ENCODE measurements at regions of chr12 and their contacts with region 1.

Region 1: DNA sequence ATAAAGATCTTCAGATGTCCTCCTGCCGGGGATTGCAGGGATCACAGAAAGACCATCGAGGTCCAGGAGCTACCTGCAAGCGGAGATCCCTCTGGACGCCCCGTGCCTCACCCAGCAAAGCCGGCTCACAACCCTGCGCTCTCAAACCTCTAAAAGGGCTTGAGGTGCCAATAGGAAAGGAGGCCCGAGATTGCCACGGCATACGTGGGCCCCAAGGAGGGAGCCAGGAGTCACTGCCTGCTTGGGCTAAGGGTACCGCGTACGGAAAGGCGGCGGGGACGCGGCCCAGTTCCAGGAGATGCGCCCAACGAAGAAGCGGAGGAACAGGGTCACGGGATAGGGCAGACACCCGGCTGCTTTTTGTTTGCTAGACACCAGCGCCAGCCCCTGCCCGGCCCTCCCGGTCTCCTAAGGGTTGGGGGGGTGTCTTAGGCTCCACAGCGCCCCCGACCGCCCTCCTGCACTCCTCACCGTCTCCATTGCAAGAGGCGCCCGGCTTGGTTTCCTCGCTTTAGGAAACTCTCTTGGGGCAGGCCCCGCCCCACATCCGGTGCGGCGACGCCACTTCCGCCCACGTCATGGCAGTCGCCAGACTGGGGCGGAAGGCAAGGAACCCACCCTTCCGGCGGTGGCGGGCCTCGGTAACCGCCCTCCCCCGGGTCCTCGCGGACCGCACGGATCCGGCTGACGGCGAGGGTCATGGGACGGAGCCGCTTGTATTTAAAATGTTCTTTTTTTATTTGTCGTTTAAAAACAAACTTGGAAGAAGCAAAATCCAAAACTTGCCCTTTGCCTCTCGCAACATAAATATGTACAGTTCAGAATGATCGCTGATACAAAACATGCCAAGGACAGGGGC is at the start of gene PRKAG1:
- DNase-seq: peak; percentile 92 to 96
- ATAC-seq: peak; percentile 74 to 82
- H3K4me3 ChIP-seq: peak within 1 kb of the TSS; percentile 79 to 98 (median 89)
- H3K27ac ChIP-seq: peak within 1 kb of the TSS; percentile 96 to 99 (median 98)
- H3K4me1 ChIP-seq: peaks cover 37 to 43% of the 10 kb centered on the region in 2 donors
- H3K27me3 ChIP-seq: no peaks in the 10 kb centered on the region
- CTCF ChIP-seq: peak in 3 of 5 experiments; percentile 34 to 49 (median 41)
- POLR2A ChIP-seq: peak; percentile 89 to 95
- total RNA-seq, gene PRKAG1: 67.4 to 97.7 (median 83.9) TPM

Region 2: GRCh38 chr12:48671231-48671856 is 347.1 kb before region 1 on chr12:
- in situ Hi-C with region 1: no loop called
- intact Hi-C with region 1: loop called (anchors 5 kb)
- DNase-seq: peak; percentile 52 to 56
- ATAC-seq: peak; percentile 75 to 87
- H3K4me3 ChIP-seq: no peak overlapping the region
- H3K27ac ChIP-seq: peak overlapping the region; percentile 88 to 99 (median 96)
- H3K4me1 ChIP-seq: peaks cover 51 to 72% of the 10 kb centered on the region in 2 donors
- H3K27me3 ChIP-seq: no peaks in the 10 kb centered on the region
- CTCF ChIP-seq: no peak
- POLR2A ChIP-seq: no peak

Region 3: DNA sequence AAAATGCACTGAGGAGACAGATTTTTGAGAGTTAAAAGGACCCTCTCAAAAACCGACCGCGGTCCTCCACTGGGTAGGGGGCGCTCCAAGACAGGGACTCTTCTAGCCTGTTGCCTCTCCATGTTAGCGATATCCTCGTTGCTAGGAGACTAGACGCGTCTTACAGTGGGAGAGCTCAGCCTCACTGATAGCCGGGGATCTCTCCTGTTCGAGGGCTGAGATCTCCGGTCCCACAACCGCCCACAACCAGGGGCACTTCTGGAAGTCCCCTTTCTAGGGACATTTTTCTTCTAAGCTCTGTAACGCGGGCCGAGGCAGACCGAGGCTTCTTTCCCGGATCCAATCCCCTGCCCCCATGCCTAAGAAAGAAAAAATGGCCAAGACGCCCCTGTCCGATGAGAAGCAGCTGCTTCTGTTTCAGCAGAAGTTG is 114.5 kb before region 1 on chr12:
- in situ Hi-C with region 1: no loop called
- intact Hi-C with region 1: no loop called
- DNase-seq: peak in 1 of 2 donors; percentile 39
- ATAC-seq: peak in 1 of 2 donors; percentile 58
- H3K4me3 ChIP-seq: peak overlapping the region; percentile 27 to 53 (median 44)
- H3K27ac ChIP-seq: no peak overlapping the region
- H3K4me1 ChIP-seq: peaks cover 0 to 4% of the 10 kb centered on the region in 2 donors
- H3K27me3 ChIP-seq: peaks cover 0 to 8% (median 4%) of the 10 kb centered on the region in 3 donors
- CTCF ChIP-seq: peak in 2 of 5 experiments; percentile 30 to 49
- POLR2A ChIP-seq: no peak

Region 4: DNA sequence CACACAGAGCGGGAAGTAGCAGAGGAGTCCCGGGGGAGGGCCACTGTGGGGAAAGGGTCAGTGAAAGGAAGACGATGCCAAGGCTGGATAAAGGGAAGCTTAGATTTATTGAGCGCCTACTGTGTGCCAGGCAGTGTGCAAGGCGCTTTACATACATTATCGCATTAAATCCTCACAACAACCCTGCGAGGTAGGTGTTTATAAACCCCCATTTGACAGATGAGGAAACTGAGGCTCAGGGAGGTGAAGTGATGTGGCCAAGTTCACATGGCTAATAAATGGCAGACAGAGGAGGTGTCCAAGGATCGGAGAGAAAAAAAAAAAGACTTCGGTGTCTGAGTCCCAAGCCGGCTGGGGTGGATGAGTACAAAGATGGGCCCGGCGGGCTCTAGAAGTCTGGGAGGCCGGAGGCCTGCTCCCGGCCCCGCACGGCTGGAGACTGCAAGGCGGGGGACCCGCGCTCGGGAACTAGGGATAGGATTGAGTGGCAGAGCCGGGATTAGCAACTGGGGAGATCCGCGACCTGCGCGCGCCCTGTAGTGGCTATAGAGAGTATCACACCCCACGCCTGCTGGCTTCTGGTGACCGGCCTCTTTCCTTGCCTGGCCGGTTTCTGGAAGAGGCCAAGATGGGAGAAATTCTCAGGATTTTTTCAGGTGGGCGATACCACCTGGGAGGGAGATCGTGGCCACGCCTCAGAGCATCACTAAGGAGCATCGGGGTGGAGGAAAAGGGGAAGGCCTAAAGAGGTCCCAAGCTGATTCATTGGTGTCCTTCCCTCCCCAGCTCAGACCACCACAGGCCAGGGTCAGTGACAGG is 23.2 kb before region 1 on chr12:
- in situ Hi-C with region 1: no loop called
- intact Hi-C with region 1: loop called (anchors 1 kb)
- DNase-seq: peak in 1 of 2 donors; percentile 82
- ATAC-seq: peak; percentile 40 to 48
- H3K4me3 ChIP-seq: peak overlapping the region; percentile 28 to 53 (median 46)
- H3K27ac ChIP-seq: peak overlapping the region in 3 of 4 donors; percentile 32 to 83 (median 37)
- H3K4me1 ChIP-seq: peaks cover 26 to 41% of the 10 kb centered on the region in 2 donors
- H3K27me3 ChIP-seq: peaks cover 0 to 43% (median 13%) of the 10 kb centered on the region in 3 donors
- CTCF ChIP-seq: peak; percentile 76 to 92 (median 85)
- POLR2A ChIP-seq: no peak

Region 5: GRCh38 chr12:49060237-49061156 is 42.0 kb after region 1 on chr12 and contains the start of gene KMT2D:
- in situ Hi-C with region 1: no loop called
- intact Hi-C with region 1: loop called (anchors 1 kb)
- DNase-seq: peak; percentile 83 to 89
- ATAC-seq: peak; percentile 79
- H3K4me3 ChIP-seq: peak within 1 kb of the TSS; percentile 83 to 100 (median 94)
- H3K27ac ChIP-seq: peak within 1 kb of the TSS; percentile 97 to 100 (median 99)
- H3K4me1 ChIP-seq: peaks cover 41 to 45% of the 10 kb centered on the region in 2 donors
- H3K27me3 ChIP-seq: no peaks in the 10 kb centered on the region
- CTCF ChIP-seq: peak; percentile 36 to 83 (median 63)
- POLR2A ChIP-seq: peak; percentile 69 to 76
- total RNA-seq, gene KMT2D: 36.0 to 99.0 (median 71.3) TPM

Region 6: GRCh38 chr12:49110464-49111155 is 92.1 kb after region 1 on chr12 and contains the start of gene LMBR1L:
- in situ Hi-C with region 1: no loop called
- intact Hi-C with region 1: loop called (anchors 1 kb)
- DNase-seq: peak; percentile 97 to 98
- ATAC-seq: peak; percentile 97 to 98
- H3K4me3 ChIP-seq: peak within 1 kb of the TSS; percentile 81 to 99 (median 99)
- H3K27ac ChIP-seq: peak within 1 kb of the TSS; percentile 92 to 100 (median 100)
- H3K4me1 ChIP-seq: peaks cover 43 to 48% of the 10 kb centered on the region in 2 donors
- H3K27me3 ChIP-seq: no peaks in the 10 kb centered on the region
- CTCF ChIP-seq: peak; percentile 50 to 67 (median 56)
- POLR2A ChIP-seq: peak; percentile 80 to 97
- total RNA-seq, gene LMBR1L: 11.1 to 27.2 (median 15.9) TPM

Region 7: DNA sequence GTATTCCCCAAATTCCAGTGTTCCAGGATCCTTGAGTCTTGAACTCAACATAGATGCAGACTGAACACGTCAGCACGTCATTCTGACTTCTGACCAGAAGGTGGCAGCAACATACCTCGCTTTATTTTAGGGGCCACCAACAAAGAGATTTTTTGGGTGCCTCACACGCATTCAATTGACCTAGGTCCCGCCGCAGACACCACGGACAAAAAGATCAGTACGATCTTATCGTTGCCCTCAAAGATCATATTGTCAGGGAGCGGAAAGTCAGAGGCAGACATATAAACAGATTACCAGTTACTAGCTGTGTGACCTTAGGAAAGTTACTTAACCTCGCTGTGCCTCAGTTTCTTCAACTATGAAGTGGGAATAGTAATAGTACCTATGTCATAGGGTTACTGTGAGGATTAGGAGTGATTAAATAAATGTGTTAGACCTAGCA is 269.9 kb after region 1 on chr12:
- in situ Hi-C with region 1: no loop called
- intact Hi-C with region 1: no loop called
- DNase-seq: no peak
- ATAC-seq: peak in 1 of 2 donors; percentile 56
- H3K4me3 ChIP-seq: no peak overlapping the region
- H3K27ac ChIP-seq: no peak overlapping the region
- H3K4me1 ChIP-seq: no peaks in the 10 kb centered on the region
- H3K27me3 ChIP-seq: peaks cover 9 to 10% (median 10%) of the 10 kb centered on the region in 3 donors
- CTCF ChIP-seq: peak; percentile 61 to 80 (median 75)
- POLR2A ChIP-seq: no peak